Sigmoid colon (tissue), 7 donors: ENCODE measurements at regions of chr15 and their contacts with region 1.

Region 1: GRCh38 chr15:68304589-68305337 is 27.2 kb downstream of the FEM1B start:
- DNase-seq: no peak
- H3K4me3 ChIP-seq: no peak overlapping the region
- H3K27ac ChIP-seq: no peak overlapping the region
- H3K4me1 ChIP-seq: peaks cover 0 to 10% (median 7%) of the 10 kb centered on the region in 4 donors
- H3K27me3 ChIP-seq: no peaks in the 10 kb centered on the region
- CTCF ChIP-seq: no peak
- EP300 ChIP-seq: no peak
- POLR2A ChIP-seq: no peak

Region 2: GRCh38 chr15:68252925-68253534 is 51.7 kb before region 1 on chr15:
- intact Hi-C with region 1: loop called (anchors 1 kb)
- DNase-seq: no peak
- H3K4me3 ChIP-seq: no peak overlapping the region
- H3K27ac ChIP-seq: no peak overlapping the region
- H3K4me1 ChIP-seq: peaks cover 0 to 18% (median 14%) of the 10 kb centered on the region in 4 donors
- H3K27me3 ChIP-seq: no peaks in the 10 kb centered on the region
- CTCF ChIP-seq: peak; percentile 69 to 86 (median 80)
- EP300 ChIP-seq: no peak
- POLR2A ChIP-seq: no peak

Region 3: GRCh38 chr15:68352401-68353062 is 47.8 kb after region 1 on chr15:
- intact Hi-C with region 1: no loop called
- DNase-seq: peak; percentile 90
- H3K4me3 ChIP-seq: no peak overlapping the region
- H3K27ac ChIP-seq: peak overlapping the region; percentile 66 to 90 (median 80)
- H3K4me1 ChIP-seq: peaks cover 0 to 18% (median 13%) of the 10 kb centered on the region in 4 donors
- H3K27me3 ChIP-seq: no peaks in the 10 kb centered on the region
- CTCF ChIP-seq: no peak
- EP300 ChIP-seq: peak in 1 of 4 donors; percentile 39
- POLR2A ChIP-seq: no peak

Region 4: GRCh38 chr15:68383161-68384074 is 78.7 kb after region 1 on chr15:
- intact Hi-C with region 1: loop called (anchors 1 kb)
- DNase-seq: peak; percentile 29
- H3K4me3 ChIP-seq: no peak overlapping the region
- H3K27ac ChIP-seq: peak overlapping the region in 1 of 4 donors; percentile 52
- H3K4me1 ChIP-seq: peaks cover 0 to 14% (median 5%) of the 10 kb centered on the region in 4 donors
- H3K27me3 ChIP-seq: no peaks in the 10 kb centered on the region
- CTCF ChIP-seq: peak; percentile 33 to 75 (median 54)
- EP300 ChIP-seq: no peak
- POLR2A ChIP-seq: no peak

Region 5: GRCh38 chr15:68550481-68551295 is 245.9 kb after region 1 on chr15:
- intact Hi-C with region 1: loop called (anchors 5 kb)
- DNase-seq: peak; percentile 84
- H3K4me3 ChIP-seq: no peak overlapping the region
- H3K27ac ChIP-seq: no peak overlapping the region
- H3K4me1 ChIP-seq: no peaks in the 10 kb centered on the region
- H3K27me3 ChIP-seq: peaks cover 0 to 13% (median 3%) of the 10 kb centered on the region in 3 donors
- CTCF ChIP-seq: peak; percentile 58 to 94 (median 76)
- EP300 ChIP-seq: no peak
- POLR2A ChIP-seq: no peak

Region 6: GRCh38 chr15:68672781-68673205 is 368.0 kb after region 1 on chr15:
- intact Hi-C with region 1: loop called (anchors 10 kb)
- DNase-seq: peak; percentile 45
- H3K4me3 ChIP-seq: no peak overlapping the region
- H3K27ac ChIP-seq: no peak overlapping the region
- H3K4me1 ChIP-seq: no peaks in the 10 kb centered on the region
- H3K27me3 ChIP-seq: no peaks in the 10 kb centered on the region
- CTCF ChIP-seq: no peak
- EP300 ChIP-seq: no peak
- POLR2A ChIP-seq: no peak